ENCODE measurements at regions of chr4 and their contacts with region 1.

Region 1: DNA sequence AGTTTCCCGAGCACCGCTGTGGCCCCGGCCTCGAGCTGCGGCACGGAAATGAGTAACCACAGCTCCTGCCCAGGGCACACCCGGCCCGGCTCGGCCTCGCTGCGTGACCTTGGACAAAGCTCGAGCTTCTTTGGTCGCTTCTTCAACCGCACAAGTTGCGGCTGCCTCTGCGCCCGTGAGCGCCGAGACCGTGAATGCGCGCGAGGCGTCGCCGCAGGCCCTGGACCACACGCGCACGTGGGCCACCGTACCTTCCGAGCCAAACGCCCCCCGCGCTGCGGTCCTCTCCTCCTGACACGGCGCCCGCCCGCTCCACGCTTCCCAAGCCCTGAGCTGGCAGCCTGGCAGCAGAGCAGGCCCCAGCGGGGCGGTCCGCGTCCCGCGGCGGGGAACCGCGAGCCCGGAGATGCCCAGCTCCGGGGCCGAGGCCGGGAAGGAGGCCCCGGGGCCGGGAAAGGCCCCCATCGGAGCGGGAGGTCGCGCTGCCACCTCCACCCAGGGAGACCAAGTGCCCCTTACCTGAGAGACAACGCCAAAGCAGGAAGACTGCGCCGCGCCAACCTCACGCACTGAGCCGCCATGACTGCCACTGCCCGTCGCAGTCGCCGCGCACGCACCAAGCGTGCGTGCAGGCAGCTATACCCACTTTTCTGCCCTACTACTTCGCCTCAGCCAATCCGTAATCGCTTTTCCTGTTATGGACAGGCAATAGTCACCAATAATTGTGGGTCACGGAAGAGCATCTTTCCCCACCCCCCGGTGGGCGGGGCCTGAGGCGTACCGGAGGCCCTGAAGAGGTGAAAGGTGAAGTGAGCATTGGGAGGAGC is at the start of gene GRPEL1:
- DNase-seq: peak; percentile 100
- H3K4me3 Mint-ChIP-seq: peak within 1 kb of the TSS; percentile 94
- H3K27ac Mint-ChIP-seq: peak within 1 kb of the TSS; percentile 94
- H3K4me1 Mint-ChIP-seq: peaks cover 50% of the 10 kb centered on the region
- H3K27me3 Mint-ChIP-seq: peaks cover 16% of the 10 kb centered on the region
- total RNA-seq, gene GRPEL1: 106 and 115 TPM in 2 replicates

Region 2: DNA sequence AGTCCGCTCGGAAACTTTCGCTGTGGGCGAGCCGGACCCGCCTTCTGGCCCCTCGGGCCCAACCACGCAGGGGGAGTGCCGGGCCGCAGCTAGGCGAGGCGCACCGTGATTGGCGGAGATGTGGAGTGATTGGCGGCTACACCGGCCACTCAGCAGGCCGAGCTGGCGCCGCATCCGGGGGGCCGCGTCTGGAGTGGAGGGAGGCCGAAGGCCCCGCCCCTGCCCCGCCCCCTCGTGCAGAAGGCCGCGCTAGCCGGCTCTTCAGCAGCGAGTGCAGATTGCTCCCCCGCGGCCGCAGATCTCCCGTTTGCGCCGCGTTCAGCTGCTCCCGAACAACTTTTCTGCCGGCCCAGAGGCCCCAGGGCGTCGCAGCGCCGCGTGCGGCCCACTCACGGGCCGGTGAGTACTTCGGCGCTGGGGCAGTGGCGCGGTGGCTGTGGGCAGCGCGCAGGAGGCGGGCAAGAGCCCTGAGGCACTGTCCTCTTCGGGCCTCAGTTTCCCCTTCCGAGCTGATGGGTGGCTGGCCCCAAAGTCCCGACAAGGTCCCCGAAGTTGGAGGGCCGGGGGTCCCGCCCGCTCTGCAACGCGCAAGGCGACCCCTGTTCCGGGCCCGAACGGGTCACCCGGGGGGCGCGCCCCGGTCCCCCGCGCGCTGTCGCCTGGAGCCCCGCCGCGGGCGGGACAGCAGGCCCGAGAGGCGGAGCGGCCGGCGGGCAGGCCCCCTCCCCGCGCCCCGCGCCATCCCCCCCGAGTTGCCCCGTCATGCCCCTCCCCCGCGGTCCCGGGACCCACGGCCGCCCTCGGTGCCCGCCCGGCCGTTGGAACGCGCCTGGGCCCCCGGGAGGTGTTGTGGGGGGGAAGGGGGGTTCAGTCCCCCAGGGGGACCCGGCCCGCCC is 797.8 kb before region 1 on chr4 and contains the start of gene WFS1:
- intact Hi-C with region 1: loop called (anchors 5 kb)
- DNase-seq: peak; percentile 96
- H3K4me3 Mint-ChIP-seq: peak within 1 kb of the TSS; percentile 81
- H3K27ac Mint-ChIP-seq: no peak within 1 kb of the TSS
- H3K4me1 Mint-ChIP-seq: peaks cover 18% of the 10 kb centered on the region
- H3K27me3 Mint-ChIP-seq: peaks cover 34% of the 10 kb centered on the region
- total RNA-seq, gene WFS1: 5.7 and 9.3 TPM in 2 replicates

Region 3: DNA sequence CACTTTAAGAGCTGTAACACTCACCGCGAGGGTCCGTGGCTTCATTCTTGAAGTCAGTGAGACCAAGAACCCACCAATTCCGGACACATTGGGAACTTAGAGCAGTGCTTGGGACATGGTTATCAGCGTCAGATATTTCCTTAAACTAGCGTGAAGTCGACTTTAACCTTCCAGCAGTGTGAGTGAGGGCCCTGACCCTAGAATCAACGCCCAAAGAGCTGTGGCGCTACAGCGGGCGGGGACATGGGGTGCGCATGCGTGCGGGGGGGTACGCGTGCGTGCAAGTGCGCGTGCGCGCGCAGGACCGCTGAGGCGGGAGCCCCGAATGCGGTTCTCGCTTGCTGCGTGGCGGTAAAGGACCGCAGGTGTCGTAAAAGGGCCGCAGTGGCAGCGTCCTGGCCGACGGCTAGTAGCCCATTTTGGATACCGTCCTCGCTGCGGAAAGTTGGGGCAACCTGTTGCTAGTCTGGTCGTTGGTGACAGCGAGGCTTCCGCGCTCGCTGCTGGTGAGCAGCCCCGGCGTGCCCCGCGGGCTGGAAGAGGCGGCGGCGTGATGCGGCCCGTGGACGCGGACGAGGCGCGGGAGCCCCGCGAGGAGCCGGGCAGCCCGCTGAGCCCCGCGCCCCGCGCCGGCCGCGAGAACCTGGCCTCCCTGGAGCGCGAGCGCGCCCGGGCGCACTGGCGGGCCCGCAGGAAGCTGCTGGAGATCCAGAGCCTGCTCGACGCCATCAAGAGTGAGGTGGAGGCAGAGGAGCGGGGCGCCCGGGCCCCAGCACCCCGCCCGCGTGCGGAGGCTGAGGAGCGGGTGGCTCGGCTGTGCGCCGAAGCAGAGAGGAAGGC is 393.8 kb before region 1 on chr4:
- intact Hi-C with region 1: loop called (anchors 1 kb)
- DNase-seq: peak; percentile 93
- H3K4me3 Mint-ChIP-seq: peak overlapping the region; percentile 98
- H3K27ac Mint-ChIP-seq: peak overlapping the region; percentile 97
- H3K4me1 Mint-ChIP-seq: peaks cover 48% of the 10 kb centered on the region
- H3K27me3 Mint-ChIP-seq: no peaks in the 10 kb centered on the region

Region 4: DNA sequence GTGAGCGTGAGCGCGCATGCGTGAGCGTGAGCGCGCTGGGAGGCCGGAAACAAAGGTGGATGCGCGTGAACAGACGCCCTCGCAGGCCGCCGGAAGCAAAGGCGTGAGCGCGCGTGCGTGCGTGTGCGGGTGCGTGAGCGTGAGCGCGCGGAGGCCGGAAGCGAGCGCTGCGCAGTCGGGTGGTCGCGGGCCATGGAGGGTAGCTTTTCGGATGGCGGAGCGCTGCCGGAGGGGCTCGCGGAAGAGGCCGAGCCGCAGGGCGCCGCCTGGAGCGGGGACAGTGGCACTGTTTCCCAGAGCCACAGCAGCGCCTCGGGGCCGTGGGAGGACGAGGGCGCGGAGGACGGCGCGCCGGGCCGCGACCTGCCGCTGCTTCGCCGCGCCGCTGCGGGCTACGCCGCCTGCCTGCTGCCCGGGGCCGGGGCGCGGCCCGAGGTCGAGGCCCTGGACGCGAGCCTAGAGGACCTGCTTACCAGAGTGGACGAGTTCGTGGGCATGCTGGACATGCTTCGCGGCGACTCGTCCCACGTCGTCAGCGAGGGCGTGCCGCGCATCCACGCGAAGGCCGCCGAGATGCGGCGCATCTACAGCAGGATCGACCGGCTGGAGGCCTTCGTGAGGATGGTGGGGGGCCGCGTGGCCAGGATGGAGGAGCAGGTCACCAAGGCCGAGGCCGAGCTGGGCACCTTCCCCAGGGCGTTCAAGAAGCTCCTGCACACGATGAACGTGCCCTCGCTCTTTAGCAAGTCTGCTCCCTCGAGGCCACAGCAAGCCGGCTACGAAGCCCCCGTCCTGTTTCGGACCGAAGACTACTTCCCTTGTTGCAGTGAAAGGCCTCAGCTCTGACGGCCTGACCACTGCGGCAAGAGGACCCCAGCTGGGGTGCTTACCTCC is 351.4 kb before region 1 on chr4 and contains the start of gene BLOC1S4:
- intact Hi-C with region 1: loop called (anchors 1 kb)
- DNase-seq: peak; percentile 87
- H3K4me3 Mint-ChIP-seq: peak within 1 kb of the TSS; percentile 93
- H3K27ac Mint-ChIP-seq: peak within 1 kb of the TSS; percentile 88
- H3K4me1 Mint-ChIP-seq: peaks cover 27% of the 10 kb centered on the region
- H3K27me3 Mint-ChIP-seq: peaks cover 8% of the 10 kb centered on the region
- total RNA-seq, gene BLOC1S4: 21.5 and 23.6 TPM in 2 replicates

Region 5: GRCh38 chr4:6898763-6899162 is 168.9 kb before region 1 on chr4:
- intact Hi-C with region 1: loop called (anchors 2 kb)
- DNase-seq: no peak
- H3K4me3 Mint-ChIP-seq: peak overlapping the region; percentile 72
- H3K27ac Mint-ChIP-seq: peak overlapping the region; percentile 97
- H3K4me1 Mint-ChIP-seq: peaks cover 49% of the 10 kb centered on the region
- H3K27me3 Mint-ChIP-seq: no peaks in the 10 kb centered on the region

Region 6: DNA sequence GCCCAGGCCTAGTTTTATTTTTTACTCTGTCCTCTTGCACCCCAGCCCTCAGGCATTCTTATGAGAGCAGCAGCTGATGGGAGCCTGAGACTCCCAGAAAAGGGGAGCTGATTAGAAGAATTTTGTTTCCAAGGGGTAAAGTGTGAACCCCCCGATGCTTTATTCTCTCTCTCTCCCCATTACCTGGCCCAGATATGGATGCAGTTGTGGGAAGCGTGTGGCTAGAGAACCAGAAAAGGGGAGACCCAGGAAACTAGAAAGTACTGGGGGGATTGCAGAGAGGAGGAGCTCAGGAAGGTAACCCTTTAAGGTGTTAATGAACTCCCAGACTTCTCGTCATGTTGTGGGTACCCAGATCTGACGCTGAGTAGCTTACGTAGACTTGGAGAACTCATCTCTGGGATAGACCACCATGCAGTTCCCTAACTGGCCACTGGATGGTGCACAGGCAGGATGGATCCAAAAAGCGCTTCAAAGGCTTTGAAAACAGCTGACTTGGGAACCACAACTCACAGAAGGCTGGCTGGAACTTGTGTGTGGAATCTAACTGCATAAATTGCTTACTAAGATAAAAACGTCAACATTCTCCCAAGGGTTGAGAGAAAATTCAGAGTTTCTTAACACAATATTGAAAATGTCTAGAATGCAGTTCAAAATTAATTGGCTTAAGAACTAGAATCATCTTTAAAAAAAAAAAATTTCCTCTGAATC is 93.4 kb before region 1 on chr4:
- intact Hi-C with region 1: loop called (anchors 1 kb)
- DNase-seq: peak; percentile 70
- H3K4me3 Mint-ChIP-seq: no peak overlapping the region
- H3K27ac Mint-ChIP-seq: no peak overlapping the region
- H3K4me1 Mint-ChIP-seq: peaks cover 13% of the 10 kb centered on the region
- H3K27me3 Mint-ChIP-seq: no peaks in the 10 kb centered on the region

Region 7: GRCh38 chr4:7101692-7102515 is 34.2 kb after region 1 on chr4:
- intact Hi-C with region 1: loop called (anchors 1 kb)
- DNase-seq: peak; percentile 29
- H3K4me3 Mint-ChIP-seq: peak overlapping the region; percentile 89
- H3K27ac Mint-ChIP-seq: no peak overlapping the region
- H3K4me1 Mint-ChIP-seq: peaks cover 14% of the 10 kb centered on the region
- H3K27me3 Mint-ChIP-seq: peaks cover 15% of the 10 kb centered on the region

Region 8: DNA sequence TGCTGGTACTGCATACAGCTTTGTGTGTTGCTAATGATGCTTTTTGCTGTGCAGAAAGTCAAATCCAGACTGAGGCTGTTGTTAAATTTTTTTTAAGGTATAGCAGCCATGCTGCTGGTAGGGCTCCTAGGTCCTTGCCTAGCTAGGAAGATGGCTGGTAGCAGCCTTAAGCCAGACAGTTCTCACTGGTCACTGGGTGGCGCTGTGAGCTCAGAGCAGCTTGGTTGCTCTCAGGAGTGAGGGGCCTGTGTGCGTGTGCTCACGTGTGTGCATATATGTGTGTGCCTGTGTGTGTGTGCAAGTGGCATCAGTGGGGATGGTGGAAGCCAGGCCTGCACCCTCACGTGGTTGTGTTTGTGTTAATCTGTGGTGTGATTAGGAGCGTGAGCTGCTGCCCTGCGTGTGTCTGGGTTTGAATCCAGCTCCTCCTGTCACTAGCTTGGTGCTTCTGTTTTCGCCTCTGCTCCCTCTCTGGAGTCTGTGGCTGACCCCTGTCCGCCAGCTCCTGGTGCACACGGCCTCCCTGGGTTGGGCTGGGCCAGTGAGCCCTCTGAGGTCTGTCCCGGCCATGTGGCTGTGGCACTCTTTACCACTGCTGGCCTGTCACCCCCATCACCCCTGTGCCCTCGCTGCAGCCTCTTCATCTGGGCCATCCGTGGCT is 170.8 kb after region 1 on chr4:
- intact Hi-C with region 1: no loop called
- DNase-seq: no peak
- H3K4me3 Mint-ChIP-seq: no peak overlapping the region
- H3K27ac Mint-ChIP-seq: no peak overlapping the region
- H3K4me1 Mint-ChIP-seq: no peaks in the 10 kb centered on the region
- H3K27me3 Mint-ChIP-seq: no peaks in the 10 kb centered on the region